ENCODE measurements at regions of chr12 and their contacts with region 1.

Region 1: DNA sequence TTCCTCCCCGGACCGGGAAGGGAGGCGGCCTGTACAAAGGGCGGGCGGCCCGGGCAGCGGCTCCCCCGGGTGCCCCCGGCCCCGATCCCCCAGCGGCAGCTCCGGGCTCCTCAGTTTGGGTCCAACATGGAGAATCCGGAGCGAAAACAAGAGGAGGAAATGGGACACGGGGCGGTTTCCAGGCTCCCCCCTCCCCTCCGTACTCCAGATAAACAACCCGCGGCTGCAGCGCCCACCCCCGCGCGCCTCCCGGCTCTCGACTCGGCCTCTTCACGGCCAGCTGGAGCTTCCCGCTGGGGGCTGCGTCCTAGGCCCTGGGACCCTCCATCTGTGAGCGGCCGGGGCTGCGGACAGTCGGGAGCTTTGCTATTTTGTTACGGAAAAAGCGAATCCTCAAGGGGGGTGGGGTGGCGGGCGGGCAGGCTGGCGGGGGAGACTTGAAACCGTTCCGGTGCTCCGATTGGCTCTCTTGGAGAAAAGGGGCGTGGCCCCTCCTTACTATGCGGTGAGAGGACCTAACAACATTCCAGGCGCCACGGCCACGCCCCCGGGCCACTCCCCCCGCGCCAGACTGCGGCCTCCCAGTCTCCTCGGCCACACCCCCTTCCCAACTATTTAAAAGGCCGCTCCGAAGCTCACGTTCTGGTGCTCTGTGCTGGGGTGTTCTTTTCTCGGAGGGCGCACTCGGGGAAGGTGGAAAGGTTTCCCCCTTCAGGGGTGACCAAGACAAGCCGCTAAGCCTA is at the start of gene CTDSP2:
- DNase-seq: peak; percentile 61
- ATAC-seq: peak; percentile 45
- H3K4me3 ChIP-seq: peak within 1 kb of the TSS; percentile 99
- H3K27ac ChIP-seq: peak within 1 kb of the TSS; percentile 90
- H3K4me1 ChIP-seq: peaks cover 25% of the 10 kb centered on the region
- H3K27me3 ChIP-seq: peaks cover 3 to 5% of the 10 kb centered on the region in 2 experiments; a peak in 2 of 4 replicates
- CTCF ChIP-seq: no peak; a peak in 1 of 6 replicates
- EP300 ChIP-seq: no peak
- POLR2A ChIP-seq: no peak
- RAD21 ChIP-seq: no peak
- polyA plus RNA-seq, gene CTDSP2: 17.3 to 19.0 TPM

Region 2: DNA sequence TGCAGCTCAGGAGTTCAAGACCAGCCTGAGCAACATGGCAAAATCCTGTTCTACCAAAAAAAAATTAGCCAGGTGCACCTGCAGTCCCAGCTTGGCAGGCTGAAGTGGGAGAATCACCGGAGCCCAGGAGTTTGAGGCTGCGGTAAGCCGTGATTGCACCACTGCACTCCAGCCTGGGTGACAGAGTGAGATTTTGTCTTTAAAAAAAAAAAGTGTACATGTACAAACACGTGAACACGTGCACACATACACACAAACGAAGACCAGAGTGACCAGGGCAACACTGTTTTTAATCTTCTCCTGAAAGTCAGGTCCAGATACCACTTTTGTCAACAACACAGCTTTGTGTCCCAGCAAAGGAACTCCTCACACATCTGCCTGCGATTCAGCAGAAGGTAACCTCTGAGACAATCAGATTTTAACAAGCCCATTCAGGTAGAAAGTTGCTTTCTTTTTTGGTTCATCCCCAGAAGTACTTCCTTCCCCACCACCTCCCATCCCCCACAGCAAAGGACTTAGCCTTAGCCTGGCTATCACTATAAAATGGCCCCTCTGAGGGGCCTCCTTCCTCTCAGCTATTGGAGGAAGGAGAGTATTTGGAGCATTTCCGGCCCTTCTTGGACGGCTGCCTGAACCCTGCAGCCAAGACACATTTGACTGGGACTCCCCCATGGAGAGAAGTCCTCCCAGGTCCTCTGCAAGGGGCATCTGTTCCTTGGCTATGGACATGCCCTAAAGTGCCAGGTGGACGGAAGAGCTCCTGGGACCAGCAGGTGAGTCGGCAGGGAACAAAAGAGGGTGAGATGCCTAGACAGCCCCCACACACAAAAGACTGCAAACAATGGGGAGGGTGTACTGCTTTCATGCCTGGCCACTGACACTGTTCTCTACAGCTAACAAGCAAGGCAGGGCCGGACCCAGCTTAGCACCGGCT is 10.0 kb before region 1 on chr12:
- CTCF ChIA-PET with region 1: interaction called, 24 read pairs
- POLR2A ChIA-PET with region 1: interaction called, 25 read pairs
- RAD21 ChIA-PET with region 1: interaction called, 110 read pairs
- SMC1A ChIA-PET with region 1: interaction called, 44 read pairs
- in situ Hi-C with region 1: no loop called
- intact Hi-C with region 1: no loop called
- DNase-seq: no peak
- ATAC-seq: peak; percentile 63
- H3K4me3 ChIP-seq: peak overlapping the region; percentile 46
- H3K27ac ChIP-seq: peak overlapping the region; percentile 75
- H3K4me1 ChIP-seq: peaks cover 91% of the 10 kb centered on the region
- H3K27me3 ChIP-seq: no peaks in the 10 kb centered on the region
- CTCF ChIP-seq: no peak
- EP300 ChIP-seq: no peak
- POLR2A ChIP-seq: peak; percentile 45; the same call in 1 of the 2 replicates
- RAD21 ChIP-seq: 0 out of 2 replicates have a peak, but pooled peaks have one; percentile 11

Region 3: GRCh38 chr12:57865090-57865751 is 18.5 kb after region 1 on chr12:
- CTCF ChIA-PET with region 1: interaction called, 7 read pairs
- POLR2A ChIA-PET with region 1: interaction called, 10 read pairs
- RAD21 ChIA-PET with region 1: interaction called, 4 read pairs
- SMC1A ChIA-PET with region 1: interaction called, 4 read pairs
- in situ Hi-C with region 1: no loop called
- intact Hi-C with region 1: no loop called
- DNase-seq: no peak
- ATAC-seq: peak; percentile 89
- H3K4me3 ChIP-seq: peak overlapping the region; percentile 70
- H3K27ac ChIP-seq: no peak overlapping the region
- H3K4me1 ChIP-seq: no peaks in the 10 kb centered on the region
- H3K27me3 ChIP-seq: peaks cover 0 to 3% of the 10 kb centered on the region in 2 experiments; a peak in 1 of 4 replicates
- CTCF ChIP-seq: no peak
- EP300 ChIP-seq: no peak
- POLR2A ChIP-seq: no peak
- RAD21 ChIP-seq: no peak

Region 4: DNA sequence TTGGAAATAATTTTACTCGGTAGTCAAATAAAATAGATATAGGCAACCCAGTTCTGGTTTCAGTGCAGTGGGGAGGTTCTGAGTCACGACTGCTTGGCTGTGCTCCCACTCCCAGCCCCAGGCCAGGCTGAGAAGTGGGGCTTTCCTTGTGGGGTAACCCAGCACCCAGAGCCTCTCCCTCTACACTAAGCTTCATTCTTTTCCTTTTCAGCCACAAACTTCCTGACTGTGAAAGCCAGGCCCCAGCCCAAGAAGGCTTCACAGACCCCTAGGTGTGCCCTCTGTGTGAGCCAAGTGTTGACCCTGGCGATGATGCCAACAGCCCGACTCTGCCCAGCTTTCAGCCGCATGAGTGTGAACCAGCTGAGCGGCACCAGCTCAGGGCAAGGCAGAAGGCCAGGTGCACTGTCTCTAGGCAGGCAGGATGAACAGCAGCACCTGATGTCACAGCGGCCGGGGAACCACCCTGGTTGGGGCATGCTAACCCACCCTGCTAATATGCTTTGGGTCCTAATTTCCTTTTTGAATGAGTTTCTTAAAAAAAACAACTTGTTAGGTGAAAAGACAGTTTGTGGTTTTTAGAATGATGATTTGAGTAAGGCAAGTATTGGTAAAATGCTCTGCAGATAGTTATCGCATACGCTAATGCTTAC is 52.4 kb after region 1 on chr12:
- CTCF ChIA-PET with region 1: interaction called, 28 read pairs
- POLR2A ChIA-PET with region 1: interaction called, 24 read pairs
- RAD21 ChIA-PET with region 1: interaction called, 88 read pairs
- SMC1A ChIA-PET with region 1: interaction called, 416 read pairs
- in situ Hi-C with region 1: no loop called
- intact Hi-C with region 1: loop called (anchors 2 kb)
- DNase-seq: peak; percentile 79
- ATAC-seq: peak; percentile 92
- H3K4me3 ChIP-seq: peak overlapping the region; percentile 56; the same call in 1 of the 2 replicates
- H3K27ac ChIP-seq: peak overlapping the region; percentile 87
- H3K4me1 ChIP-seq: peaks cover 56% of the 10 kb centered on the region
- H3K27me3 ChIP-seq: no peaks in the 10 kb centered on the region; a peak in 1 of 4 replicates
- CTCF ChIP-seq: no peak
- EP300 ChIP-seq: peak; percentile 27 to 47; a peak in 2 of 4 replicates
- POLR2A ChIP-seq: peak; percentile 66
- RAD21 ChIP-seq: no peak

Region 5: GRCh38 chr12:57904848-57905811 is 58.4 kb after region 1 on chr12:
- CTCF ChIA-PET with region 1: interaction called, 16 read pairs
- POLR2A ChIA-PET with region 1: interaction called, 6 read pairs
- RAD21 ChIA-PET with region 1: interaction called, 21 read pairs
- SMC1A ChIA-PET with region 1: interaction called, 416 read pairs
- in situ Hi-C with region 1: no loop called
- intact Hi-C with region 1: no loop called
- DNase-seq: peak; percentile 46
- ATAC-seq: peak; percentile 97
- H3K4me3 ChIP-seq: no peak overlapping the region
- H3K27ac ChIP-seq: no peak overlapping the region
- H3K4me1 ChIP-seq: peaks cover 4% of the 10 kb centered on the region
- H3K27me3 ChIP-seq: peaks cover 0 to 2% of the 10 kb centered on the region in 2 experiments; a peak in 2 of 4 replicates
- CTCF ChIP-seq: peak; percentile 100; a peak in 5 of 6 replicates
- EP300 ChIP-seq: no peak
- POLR2A ChIP-seq: no peak
- RAD21 ChIP-seq: peak; percentile 99

Region 6: GRCh38 chr12:57952766-57953165 is 106.0 kb after region 1 on chr12:
- CTCF ChIA-PET with region 1: no interaction called
- POLR2A ChIA-PET with region 1: interaction called, 10 read pairs
- RAD21 ChIA-PET with region 1: no interaction called
- SMC1A ChIA-PET with region 1: no interaction called
- in situ Hi-C with region 1: no loop called
- intact Hi-C with region 1: no loop called
- DNase-seq: no peak
- ATAC-seq: no peak
- H3K4me3 ChIP-seq: no peak overlapping the region
- H3K27ac ChIP-seq: no peak overlapping the region
- H3K4me1 ChIP-seq: no peaks in the 10 kb centered on the region
- H3K27me3 ChIP-seq: no peaks in the 10 kb centered on the region
- CTCF ChIP-seq: no peak
- EP300 ChIP-seq: no peak
- POLR2A ChIP-seq: no peak
- RAD21 ChIP-seq: no peak